KBM-7 (cell line): ENCODE measurements at regions of chr12 and their contacts with region 1.

Region 1: DNA sequence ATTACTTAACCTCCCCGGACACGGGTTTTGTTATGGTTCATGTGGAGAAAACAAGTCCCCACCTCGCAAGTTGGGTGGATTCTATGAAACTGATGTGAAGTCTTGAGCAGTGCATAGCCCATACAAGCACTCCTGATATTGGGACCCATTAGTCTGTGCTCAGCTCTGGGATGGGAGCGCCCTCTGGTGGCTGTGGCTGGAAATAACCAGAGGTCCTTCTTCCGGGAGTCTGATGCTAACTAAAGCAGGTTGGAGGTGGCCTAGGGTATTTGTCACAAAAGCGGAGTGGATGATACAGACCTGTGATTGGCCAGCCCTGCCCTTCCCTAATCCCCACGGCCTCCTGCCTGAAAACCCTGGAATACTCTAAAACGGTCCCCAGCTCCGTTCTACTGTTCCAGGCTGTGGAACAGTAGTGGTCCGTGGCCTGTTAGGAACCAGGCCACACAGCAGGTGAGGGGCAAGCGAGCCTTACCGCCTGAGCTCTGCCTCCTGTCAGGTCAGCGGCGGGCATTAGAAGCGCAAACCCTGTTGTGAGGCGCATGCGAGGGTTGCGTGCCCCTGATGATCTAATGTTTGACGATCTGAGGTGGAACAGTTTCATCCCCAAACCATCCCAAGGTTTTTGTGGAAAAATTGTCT is 6.4 kb downstream of the SLC48A1 start:
- DNase-seq: peak; percentile 90

Region 2: DNA sequence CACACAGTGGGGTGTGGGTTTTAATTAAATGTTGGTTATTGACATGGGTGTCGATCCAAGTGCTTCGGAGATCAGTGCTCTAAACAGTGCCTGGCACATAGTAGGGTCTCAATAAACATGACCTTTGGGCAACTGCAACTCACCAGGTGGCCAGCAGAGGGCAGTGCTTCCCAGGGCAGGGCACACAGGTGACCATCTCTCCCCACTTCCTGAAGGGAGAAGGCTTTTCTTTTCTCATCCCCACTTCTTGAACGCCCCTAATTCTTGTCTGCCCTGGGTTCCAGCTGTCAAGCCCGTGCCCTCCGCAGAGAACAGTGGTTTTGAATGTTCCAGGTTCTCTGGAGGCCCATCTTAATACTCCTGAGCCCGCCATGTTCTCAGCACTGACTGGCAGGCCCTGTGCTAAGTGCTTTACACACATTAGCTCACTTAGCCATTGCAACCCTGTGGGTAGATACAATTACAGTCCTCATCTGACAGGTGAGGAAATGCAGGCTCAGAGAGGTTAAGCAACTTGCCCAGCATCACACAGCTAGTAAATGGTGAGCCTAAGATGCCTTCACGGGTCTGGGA is 37.1 kb before region 1 on chr12:
- in situ Hi-C with region 1: loop called (anchors 5 kb)
- DNase-seq: peak; percentile 64